ENCODE measurements at regions of chr17 and their contacts with region 1.

Region 1: GRCh38 chr17:8118769-8119580 is 661 bp upstream of the ALOXE3 start:
- DNase-seq: peak; percentile 60 to 85 (median 79)
- H3K4me3 ChIP-seq: peak overlapping the region; percentile 45 to 77 (median 61)
- H3K4me3 Mint-ChIP-seq: peak overlapping the region; percentile 85 to 93
- H3K27ac ChIP-seq: no peak overlapping the region
- H3K27ac Mint-ChIP-seq: peak overlapping the region; percentile 85 to 91 (median 87)
- H3K4me1 ChIP-seq: peaks cover 56 to 69% of the 10 kb centered on the region in 2 donors
- H3K4me1 Mint-ChIP-seq: peaks cover 61% of the 10 kb centered on the region
- H3K27me3 ChIP-seq: peaks cover 45 to 78% of the 10 kb centered on the region in 2 donors
- H3K27me3 Mint-ChIP-seq: peaks cover 73 to 91% (median 88%) of the 10 kb centered on the region in 3 donors
- CTCF ChIP-seq: peak; percentile 96

Region 2: DNA sequence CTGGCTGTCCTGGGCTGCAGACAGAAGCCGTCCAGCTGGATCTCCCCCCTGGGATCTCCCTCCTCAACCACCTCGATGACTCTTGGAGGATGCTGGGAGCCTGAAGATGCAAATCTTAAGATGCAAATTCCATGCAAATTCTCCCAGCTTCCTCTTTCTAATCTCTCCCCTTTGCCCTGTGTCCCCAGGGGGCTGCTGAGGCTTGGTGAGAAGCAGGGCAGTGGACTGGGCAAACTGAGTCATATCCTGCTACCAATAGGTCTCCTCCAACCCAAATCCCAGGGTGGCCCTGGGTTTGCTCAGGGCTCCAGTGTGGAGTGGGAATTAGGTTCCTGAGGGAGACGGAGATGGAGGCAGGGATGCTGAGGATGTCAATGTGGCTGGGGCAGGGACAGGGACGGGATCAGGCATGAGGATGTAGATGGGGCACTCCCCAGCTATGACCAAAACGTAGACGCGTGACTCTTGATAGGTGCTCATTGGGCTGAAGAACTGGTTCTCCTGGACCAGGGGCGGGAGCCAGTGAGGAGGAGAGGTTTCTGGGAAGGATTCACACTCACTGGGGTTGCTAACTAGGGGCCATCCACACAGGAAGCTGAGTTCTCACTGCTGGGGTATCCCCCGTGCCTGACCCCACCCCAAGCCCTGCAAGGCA is 27.8 kb before region 1 on chr17:
- intact Hi-C with region 1: loop called in 1 of 2 experiments (anchors 2 kb)
- DNase-seq: peak in 2 of 3 donors; percentile 17 to 63
- H3K4me3 ChIP-seq: no peak overlapping the region
- H3K4me3 Mint-ChIP-seq: peak overlapping the region in 1 of 2 donors; percentile 37
- H3K27ac ChIP-seq: no peak overlapping the region
- H3K27ac Mint-ChIP-seq: no peak overlapping the region
- H3K4me1 ChIP-seq: peaks cover 0 to 7% of the 10 kb centered on the region in 2 donors
- H3K4me1 Mint-ChIP-seq: peaks cover 9% of the 10 kb centered on the region
- H3K27me3 ChIP-seq: peaks cover 0 to 10% of the 10 kb centered on the region in 2 donors
- H3K27me3 Mint-ChIP-seq: peaks cover 25 to 58% (median 34%) of the 10 kb centered on the region in 3 donors
- CTCF ChIP-seq: no peak

Region 3: GRCh38 chr17:8103549-8103948 is 15.4 kb before region 1 on chr17:
- intact Hi-C with region 1: no loop called
- DNase-seq: no peak
- H3K4me3 ChIP-seq: no peak overlapping the region
- H3K4me3 Mint-ChIP-seq: no peak overlapping the region
- H3K27ac ChIP-seq: no peak overlapping the region
- H3K27ac Mint-ChIP-seq: peak overlapping the region in 2 of 7 donors; percentile 1 to 44
- H3K4me1 ChIP-seq: no peaks in the 10 kb centered on the region
- H3K4me1 Mint-ChIP-seq: peaks cover 6% of the 10 kb centered on the region
- H3K27me3 ChIP-seq: no peaks in the 10 kb centered on the region
- H3K27me3 Mint-ChIP-seq: peaks cover 2 to 10% (median 7%) of the 10 kb centered on the region in 3 donors
- CTCF ChIP-seq: no peak

Region 4: GRCh38 chr17:8138672-8139371 is 19.8 kb after region 1 on chr17:
- intact Hi-C with region 1: no loop called
- DNase-seq: peak; percentile 88 to 93 (median 90)
- H3K4me3 ChIP-seq: peak overlapping the region; percentile 4 to 68 (median 21)
- H3K4me3 Mint-ChIP-seq: no peak overlapping the region
- H3K27ac ChIP-seq: peak overlapping the region; percentile 55 to 58
- H3K27ac Mint-ChIP-seq: no peak overlapping the region
- H3K4me1 ChIP-seq: peaks cover 34 to 40% of the 10 kb centered on the region in 2 donors
- H3K4me1 Mint-ChIP-seq: no peaks in the 10 kb centered on the region
- H3K27me3 ChIP-seq: peaks cover 0 to 10% of the 10 kb centered on the region in 2 donors
- H3K27me3 Mint-ChIP-seq: peaks cover 6 to 18% (median 11%) of the 10 kb centered on the region in 3 donors
- CTCF ChIP-seq: peak; percentile 94

Region 5: DNA sequence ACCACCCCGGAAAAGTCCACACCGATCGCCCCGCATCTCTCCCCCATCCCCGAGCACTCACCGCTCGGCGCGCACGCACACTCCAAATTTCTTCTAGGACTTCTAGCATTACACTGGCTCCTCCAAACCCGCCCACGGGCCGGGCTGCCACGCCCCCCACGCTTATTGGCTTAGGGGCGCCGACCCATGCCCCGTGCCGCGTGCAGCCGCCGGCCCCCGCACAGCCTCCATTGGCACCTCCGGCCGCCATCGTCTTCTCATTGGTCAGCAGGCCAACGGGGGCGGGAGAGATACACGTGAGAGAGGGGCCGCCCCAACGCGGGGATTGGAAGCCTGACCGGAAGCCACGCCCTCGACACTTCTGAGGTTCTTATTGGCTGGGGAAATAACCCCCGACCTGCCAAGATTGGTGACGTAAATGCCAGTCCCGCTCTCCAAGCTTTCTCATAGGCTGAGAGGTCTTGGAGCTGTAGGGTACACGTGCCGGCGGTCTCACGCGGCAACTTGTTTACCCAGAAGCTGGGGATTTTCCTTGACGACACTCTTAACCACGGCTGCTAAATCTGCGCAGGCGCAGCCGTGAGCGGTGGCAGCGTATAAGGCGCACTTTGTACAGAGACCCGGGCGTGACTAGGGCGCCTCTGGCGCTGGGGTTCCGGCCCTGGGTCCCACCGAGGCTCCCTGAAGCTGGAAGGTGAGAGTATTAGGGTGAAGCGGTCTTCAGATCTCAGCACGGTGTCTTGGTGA is 37.4 kb after region 1 on chr17:
- intact Hi-C with region 1: loop called in 1 of 2 experiments (anchors 5 kb)
- DNase-seq: peak; percentile 100
- H3K4me3 ChIP-seq: peak overlapping the region; percentile 65 to 100 (median 88)
- H3K4me3 Mint-ChIP-seq: no peak overlapping the region
- H3K27ac ChIP-seq: peak overlapping the region; percentile 89 to 99
- H3K27ac Mint-ChIP-seq: no peak overlapping the region
- H3K4me1 ChIP-seq: peaks cover 63 to 93% of the 10 kb centered on the region in 2 donors
- H3K4me1 Mint-ChIP-seq: peaks cover 50% of the 10 kb centered on the region
- H3K27me3 ChIP-seq: no peaks in the 10 kb centered on the region
- H3K27me3 Mint-ChIP-seq: peaks cover 0 to 5% (median 0%) of the 10 kb centered on the region in 3 donors
- CTCF ChIP-seq: no peak